Activated naive CD4-positive, alpha-beta T cell treated with anti-CD3 and anti-CD28 coated beads for 36 hours (primary cell): ENCODE measurements at regions of chr15 and their contacts with region 1.

Region 1: GRCh38 chr15:45634442-45635190 is at the start of gene SQOR:
- DNase-seq: peak; percentile 76
- H3K4me3 Mint-ChIP-seq: peak within 1 kb of the TSS; percentile 99
- H3K27ac Mint-ChIP-seq: peak within 1 kb of the TSS; percentile 86
- H3K4me1 Mint-ChIP-seq: peaks cover 43% of the 10 kb centered on the region
- H3K27me3 Mint-ChIP-seq: no peaks in the 10 kb centered on the region
- total RNA-seq, gene SQOR: 54.3 to 56.4 TPM

Region 2: GRCh38 chr15:45279024-45279698 is 355.5 kb before region 1 on chr15:
- CTCF ChIA-PET with region 1: no interaction called
- intact Hi-C with region 1: loop called (anchors 1 kb)
- DNase-seq: peak; percentile 96
- H3K4me3 Mint-ChIP-seq: peak overlapping the region; percentile 81
- H3K27ac Mint-ChIP-seq: peak overlapping the region; percentile 52
- H3K4me1 Mint-ChIP-seq: peaks cover 17% of the 10 kb centered on the region
- H3K27me3 Mint-ChIP-seq: no peaks in the 10 kb centered on the region